ENCODE measurements at regions of chr4 and their contacts with region 1.

Region 1: GRCh38 chr4:183297675-183298074 is 22.4 kb downstream of the CLDN22 start:
- DNase-seq: no peak

Region 2: DNA sequence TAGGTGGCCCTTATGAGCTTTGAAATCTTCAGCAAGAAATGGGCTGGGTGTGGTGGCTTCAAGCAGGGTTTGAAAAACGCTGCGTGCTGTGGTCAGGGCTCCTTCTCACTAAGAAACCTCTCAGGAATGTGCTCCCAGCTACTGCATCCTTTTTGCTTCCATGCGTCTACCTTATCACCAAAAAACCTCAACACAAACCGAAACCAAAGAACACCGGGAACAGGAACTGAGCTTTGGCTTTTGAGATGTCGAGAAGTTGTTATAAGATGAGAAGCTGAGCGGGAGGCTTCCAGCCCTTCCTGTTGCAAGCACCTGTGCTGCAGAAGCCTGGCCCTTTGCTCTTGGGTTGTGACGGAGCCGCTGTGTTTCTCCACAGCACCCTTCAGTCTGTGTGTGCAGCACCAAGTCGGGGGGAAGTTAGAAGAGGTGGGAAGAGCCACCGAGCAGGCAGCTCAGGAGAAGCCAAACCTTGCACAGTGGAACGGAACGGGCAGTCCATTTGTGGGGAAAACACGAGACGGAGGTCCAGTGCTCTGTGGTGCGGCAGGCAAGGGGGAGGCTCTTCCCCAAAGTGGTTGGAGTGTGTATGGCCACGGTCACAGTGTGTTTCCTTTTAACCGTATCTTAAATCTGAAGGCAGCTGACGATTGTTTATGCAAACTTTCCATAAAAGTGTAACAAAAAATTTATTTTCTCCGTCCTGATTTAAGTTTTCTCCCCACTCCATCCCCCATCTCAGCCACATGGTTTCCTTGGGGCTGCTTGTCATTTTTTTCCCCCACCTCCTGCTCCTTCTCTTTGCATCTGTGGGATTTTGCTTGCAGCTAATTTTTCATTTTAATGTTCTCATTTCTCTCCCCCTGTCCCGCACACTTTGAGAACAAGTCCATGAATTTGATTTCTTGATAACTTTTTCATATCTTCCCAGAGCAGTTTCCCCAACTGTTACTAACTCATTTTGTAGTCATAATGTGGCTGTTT is 731.0 kb after region 1 on chr4:
- intact Hi-C with region 1: loop called in 1 of 2 experiments (anchors 10 kb)
- DNase-seq: no peak